HEK293 (cell line): ENCODE measurements at regions of chr12 and their contacts with region 1.

Region 1: DNA sequence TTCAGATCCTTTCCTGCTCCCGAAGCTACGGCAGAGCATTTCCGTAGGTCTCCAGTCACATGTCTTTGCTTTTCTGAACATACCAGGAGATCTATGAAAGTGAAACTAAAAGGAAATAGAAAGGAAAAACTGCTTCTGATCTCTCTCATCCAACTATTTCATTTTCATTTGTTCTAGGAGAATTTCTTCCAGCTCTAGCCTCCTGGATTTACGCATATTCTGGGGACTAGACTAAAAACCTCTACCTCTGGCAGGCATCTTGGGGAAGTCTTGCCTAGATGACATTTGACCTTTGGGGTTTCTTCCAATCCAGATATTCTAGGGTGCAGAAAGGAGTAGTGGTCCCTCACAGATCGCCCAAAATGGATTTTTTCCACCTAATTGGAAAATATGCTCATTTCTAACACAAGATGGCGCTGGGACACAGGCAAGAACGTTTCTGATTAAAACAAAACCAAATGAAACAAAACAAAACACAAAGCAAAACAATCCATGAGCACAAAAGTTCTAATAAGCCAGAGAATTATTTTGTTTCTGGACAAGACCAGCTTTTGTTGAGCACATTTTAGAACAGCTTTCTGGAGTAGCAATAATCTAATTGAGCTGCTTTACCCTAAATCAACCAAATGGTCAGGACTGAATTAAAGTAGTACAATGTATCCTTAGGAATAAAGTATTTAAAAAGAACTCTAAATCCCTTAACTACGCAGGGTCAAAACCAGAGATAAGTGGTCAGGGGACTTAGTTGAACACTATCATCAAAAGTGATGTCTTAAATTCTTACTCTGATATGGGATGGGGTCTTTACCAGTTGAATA is 12.3 kb upstream of the PARP11 start:
- H3K4me3 ChIP-seq: no peak overlapping the region
- H3K27ac ChIP-seq: no peak overlapping the region
- H3K4me1 ChIP-seq: no peaks in the 10 kb centered on the region
- CTCF ChIP-seq: peak; percentile 61

Region 2: DNA sequence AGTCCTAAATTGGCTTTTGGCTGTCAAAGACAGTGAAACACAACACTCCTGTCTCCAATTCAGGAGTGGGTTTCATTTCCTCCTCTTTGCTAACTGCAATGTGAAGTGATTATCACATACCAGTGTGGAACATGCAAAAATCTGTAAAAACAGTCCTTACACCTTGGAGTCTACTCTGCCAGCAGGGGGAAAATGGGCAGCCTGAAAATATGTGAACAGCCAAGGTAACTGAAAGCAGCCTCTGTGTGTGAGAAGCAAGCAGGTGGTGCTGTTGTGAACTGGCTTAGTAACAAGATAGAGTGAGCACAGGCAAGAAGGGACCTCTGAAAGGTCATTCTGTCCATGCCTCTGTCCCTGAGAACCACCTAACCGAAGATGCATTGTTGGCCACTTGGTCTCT is 388.5 kb before region 1 on chr12:
- CTCF ChIA-PET with region 1: no interaction called
- POLR2A ChIA-PET with region 1: no interaction called
- H3K4me3 ChIP-seq: no peak overlapping the region
- H3K27ac ChIP-seq: no peak overlapping the region
- H3K4me1 ChIP-seq: peaks cover 9% of the 10 kb centered on the region
- CTCF ChIP-seq: peak; percentile 85

Region 3: GRCh38 chr12:3896801-3897331 is 11.4 kb after region 1 on chr12:
- CTCF ChIA-PET with region 1: interaction called, 23 read pairs
- POLR2A ChIA-PET with region 1: no interaction called
- H3K4me3 ChIP-seq: no peak overlapping the region
- H3K27ac ChIP-seq: no peak overlapping the region
- H3K4me1 ChIP-seq: no peaks in the 10 kb centered on the region
- CTCF ChIP-seq: no peak

Region 4: GRCh38 chr12:3990501-3991280 is 105.2 kb after region 1 on chr12:
- CTCF ChIA-PET with region 1: interaction called, 44 read pairs
- POLR2A ChIA-PET with region 1: no interaction called
- H3K4me3 ChIP-seq: no peak overlapping the region
- H3K27ac ChIP-seq: no peak overlapping the region
- H3K4me1 ChIP-seq: no peaks in the 10 kb centered on the region
- CTCF ChIP-seq: no peak

Region 5: GRCh38 chr12:4030929-4031702 is 145.6 kb after region 1 on chr12:
- CTCF ChIA-PET with region 1: interaction called, 128 read pairs
- POLR2A ChIA-PET with region 1: no interaction called
- H3K4me3 ChIP-seq: peak overlapping the region; percentile 27
- H3K27ac ChIP-seq: peak overlapping the region; percentile 66; the same call in 1 of the 2 replicates
- H3K4me1 ChIP-seq: peaks cover 5% of the 10 kb centered on the region; the same call in 1 of the 2 replicates
- CTCF ChIP-seq: no peak

Region 6: DNA sequence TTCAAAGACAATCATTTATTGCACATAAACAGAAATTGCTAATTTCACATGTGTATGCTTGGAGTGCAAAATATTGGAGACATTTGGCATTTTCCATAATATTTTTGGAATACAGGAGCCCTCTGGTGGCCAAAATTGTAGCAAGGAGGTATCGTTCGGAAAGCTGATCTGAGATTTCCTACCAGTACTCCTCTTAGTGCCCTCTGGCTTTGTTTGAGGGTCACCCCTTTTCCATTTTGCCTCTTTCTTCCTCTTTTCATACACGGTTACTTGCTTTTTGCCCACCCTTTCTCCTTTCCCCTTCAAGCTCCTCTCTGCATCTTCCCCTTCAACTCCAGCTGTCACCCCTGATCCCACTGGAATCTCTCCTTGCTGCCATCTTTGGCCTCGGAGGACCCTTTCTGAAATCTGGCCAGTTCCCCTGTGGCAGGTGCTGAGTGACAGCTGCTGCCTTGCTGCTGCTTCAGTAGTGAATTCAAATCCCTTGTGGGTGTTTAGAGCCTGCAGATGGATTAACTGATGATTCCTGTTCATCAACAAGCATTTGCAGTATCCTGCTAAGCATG is 152.3 kb after region 1 on chr12:
- CTCF ChIA-PET with region 1: interaction called, 128 read pairs
- POLR2A ChIA-PET with region 1: no interaction called
- H3K4me3 ChIP-seq: no peak overlapping the region
- H3K27ac ChIP-seq: no peak overlapping the region
- H3K4me1 ChIP-seq: no peaks in the 10 kb centered on the region; the same call in 1 of the 2 replicates
- CTCF ChIP-seq: peak; percentile 56